HEK293T (cell line): ENCODE measurements at regions of chr1 and their contacts with region 1.

Region 1: GRCh38 chr1:116671912-116672311 is 4.4 kb upstream of the IGSF3 start:
- DNase-seq: no peak

Region 2: DNA sequence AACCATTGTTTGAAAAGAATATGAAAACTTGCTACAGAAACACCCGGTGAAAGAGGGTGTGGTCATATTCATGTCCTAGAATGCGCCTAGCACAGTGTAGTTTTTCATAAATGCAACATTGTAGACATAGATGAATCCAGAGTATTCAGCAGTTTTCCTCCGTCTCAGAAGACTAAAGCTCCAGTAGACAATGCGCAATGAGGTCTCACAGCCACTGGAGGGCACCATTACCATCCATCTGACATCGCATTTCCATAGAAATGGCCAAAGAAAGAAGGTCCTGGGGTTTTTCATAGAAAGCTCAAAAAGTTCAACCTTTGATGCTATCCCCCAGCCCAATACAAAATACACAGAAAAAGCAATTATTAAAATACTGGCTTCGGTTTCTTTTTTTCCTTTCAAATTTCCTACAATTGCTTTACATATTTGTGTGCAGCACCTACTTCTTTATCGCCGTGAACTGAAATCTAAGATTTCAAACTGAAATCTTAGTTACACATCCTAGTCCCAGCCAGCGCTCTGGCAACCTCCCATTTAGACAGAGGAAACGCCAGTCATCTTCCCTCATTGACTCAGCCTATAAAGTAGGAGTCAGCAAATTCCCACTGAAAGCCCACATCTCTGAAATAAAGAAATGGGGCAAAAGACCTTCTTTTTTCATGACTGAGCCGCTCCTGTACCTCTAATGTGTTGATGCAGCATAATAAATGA is 97.2 kb before region 1 on chr1:
- CTCF ChIA-PET with region 1: interaction called, 25 read pairs
- POLR2A ChIA-PET with region 1: interaction called, 4 read pairs
- DNase-seq: peak; percentile 81